OCI-LY7 (cell line): ENCODE measurements at regions of chr3 and their contacts with region 1.

Region 1: GRCh38 chr3:149480325-149481017 is 6.0 kb downstream of the TM4SF4 start:
- DNase-seq: peak; percentile 38
- H3K4me3 ChIP-seq: no peak overlapping the region
- H3K27ac ChIP-seq: no peak overlapping the region
- H3K4me1 ChIP-seq: no peaks in the 10 kb centered on the region
- CTCF ChIP-seq: peak; percentile 83

Region 2: DNA sequence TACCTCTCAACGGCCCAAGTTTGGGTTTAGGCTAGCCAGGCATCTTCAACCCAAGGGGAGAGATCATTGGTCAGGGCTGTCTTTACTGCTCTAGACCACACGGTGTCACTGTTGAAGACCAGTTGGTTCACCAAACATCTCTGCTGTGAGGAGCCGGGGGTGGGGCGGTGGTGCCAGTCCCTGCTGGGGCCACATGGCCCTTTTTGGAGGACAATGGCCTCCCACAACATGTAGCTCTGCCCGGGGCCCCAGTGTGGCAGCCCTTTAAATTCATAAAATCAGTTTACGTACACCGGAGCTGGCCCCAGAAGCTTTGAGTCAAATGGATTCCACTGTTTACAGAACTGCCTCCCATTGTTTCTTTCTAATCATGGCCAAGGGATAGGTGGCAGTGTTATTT is 127.9 kb before region 1 on chr3:
- CTCF ChIA-PET with region 1: no interaction called
- POLR2A ChIA-PET with region 1: no interaction called
- intact Hi-C with region 1: loop called (anchors 1 kb)
- DNase-seq: peak; percentile 51
- H3K4me3 ChIP-seq: no peak overlapping the region
- H3K27ac ChIP-seq: no peak overlapping the region
- H3K4me1 ChIP-seq: no peaks in the 10 kb centered on the region
- CTCF ChIP-seq: peak; percentile 85

Region 3: GRCh38 chr3:149393345-149394160 is 86.9 kb before region 1 on chr3:
- CTCF ChIA-PET with region 1: no interaction called
- POLR2A ChIA-PET with region 1: no interaction called
- intact Hi-C with region 1: loop called (anchors 5 kb)
- DNase-seq: peak; percentile 36
- H3K4me3 ChIP-seq: no peak overlapping the region
- H3K27ac ChIP-seq: no peak overlapping the region
- H3K4me1 ChIP-seq: no peaks in the 10 kb centered on the region
- CTCF ChIP-seq: peak; percentile 85